GM10248 (cell line): ENCODE measurements at regions of chr4 and their contacts with region 1.

Region 1: DNA sequence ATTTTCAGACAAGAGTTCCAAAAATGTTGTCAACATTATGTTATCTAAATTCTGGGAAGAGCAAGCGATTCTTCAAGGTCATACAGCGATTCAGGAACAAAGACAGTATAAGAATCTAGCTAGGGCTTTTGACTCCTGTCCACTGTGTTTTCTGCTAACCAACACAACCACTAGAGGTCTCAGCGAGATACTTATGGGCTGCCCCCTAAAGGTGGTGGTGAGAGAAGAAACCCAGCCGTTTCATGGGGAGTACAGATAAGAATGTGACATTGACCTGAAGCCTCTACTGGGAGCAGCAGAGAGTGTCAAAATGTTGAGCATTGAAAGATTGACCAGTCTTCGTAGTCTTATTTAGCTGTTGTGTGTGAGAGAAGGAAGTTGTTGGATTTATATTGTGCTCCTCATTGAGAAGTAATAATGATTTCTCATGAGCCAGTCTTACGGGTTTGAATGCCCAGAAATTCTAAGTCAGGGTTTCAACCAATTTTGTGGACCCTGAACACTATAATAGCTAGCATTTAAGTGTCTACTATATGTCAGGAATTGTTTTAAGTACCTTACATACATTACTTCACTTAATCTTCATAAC is 168.3 kb downstream of the SPRY1 start:
- DNase-seq: peak; percentile 76
- CTCF ChIP-seq: peak; percentile 88

Region 2: DNA sequence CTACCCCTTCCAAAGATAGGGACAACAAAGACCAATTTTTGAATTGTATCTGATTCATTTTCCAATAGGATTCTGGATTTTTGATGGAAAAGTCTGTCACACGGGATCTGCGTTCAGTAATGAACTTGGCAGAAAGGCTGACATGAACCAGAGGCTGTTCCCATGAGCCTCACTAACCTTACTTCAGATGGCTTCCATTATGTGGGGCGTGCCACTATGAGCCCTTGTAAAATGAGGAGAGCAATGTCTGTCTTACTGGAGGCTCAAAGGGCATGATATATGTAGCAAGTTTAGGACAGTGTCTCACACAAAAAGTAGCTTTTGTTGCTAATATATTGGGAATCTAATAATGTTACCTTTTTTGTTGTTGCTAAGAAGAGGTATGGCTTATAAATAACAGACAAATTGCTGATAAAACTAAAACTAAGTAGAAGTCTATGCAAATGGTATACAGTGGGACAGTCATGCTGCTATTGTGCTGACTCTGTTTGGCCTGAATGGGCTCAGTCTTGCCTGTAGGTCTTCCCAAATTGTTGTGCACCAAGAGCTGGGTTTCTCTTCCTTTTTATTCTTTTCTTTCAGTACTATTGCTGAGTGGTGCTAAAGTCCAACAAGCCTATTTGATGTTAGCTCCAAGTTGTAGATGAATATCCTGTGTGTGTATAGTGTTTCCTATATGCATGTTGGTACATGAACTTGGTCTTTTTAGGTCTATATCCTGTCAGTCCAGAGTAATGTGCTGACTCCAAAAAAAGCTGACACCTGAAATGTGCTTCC is 36.2 kb before region 1 on chr4:
- CTCF ChIA-PET with region 1: no interaction called
- POLR2A ChIA-PET with region 1: no interaction called
- DNase-seq: no peak
- CTCF ChIP-seq: no peak

Region 3: GRCh38 chr4:123580981-123581664 is 16.3 kb after region 1 on chr4:
- CTCF ChIA-PET with region 1: interaction called, 19 read pairs
- POLR2A ChIA-PET with region 1: no interaction called
- DNase-seq: no peak
- CTCF ChIP-seq: no peak

Region 4: GRCh38 chr4:123588631-123589241 is 23.9 kb after region 1 on chr4:
- CTCF ChIA-PET with region 1: interaction called, 19 read pairs
- POLR2A ChIA-PET with region 1: no interaction called
- DNase-seq: peak; percentile 12
- CTCF ChIP-seq: no peak

Region 5: GRCh38 chr4:123606946-123607542 is 42.2 kb after region 1 on chr4:
- CTCF ChIA-PET with region 1: interaction called, 10 read pairs
- POLR2A ChIA-PET with region 1: no interaction called
- DNase-seq: no peak
- CTCF ChIP-seq: no peak

Region 6: GRCh38 chr4:123661080-123661737 is 96.4 kb after region 1 on chr4:
- CTCF ChIA-PET with region 1: interaction called, 23 read pairs
- POLR2A ChIA-PET with region 1: no interaction called
- DNase-seq: no peak
- CTCF ChIP-seq: no peak

Region 7: DNA sequence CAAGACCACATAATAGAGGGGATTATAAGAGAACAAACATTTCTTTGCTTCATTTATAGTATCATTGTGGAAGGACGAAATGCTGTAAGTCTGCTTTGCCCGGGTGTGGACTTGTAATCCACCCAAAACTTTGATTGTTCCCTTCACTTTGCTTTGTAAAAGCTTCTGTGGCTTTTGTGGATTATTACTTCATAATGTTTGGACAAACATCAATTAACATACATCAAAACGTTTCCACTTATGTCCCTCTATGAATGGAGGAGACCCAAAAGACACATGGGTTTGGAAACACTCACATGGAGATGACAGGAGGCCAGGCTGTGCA is 247.2 kb after region 1 on chr4:
- CTCF ChIA-PET with region 1: no interaction called
- POLR2A ChIA-PET with region 1: no interaction called
- DNase-seq: no peak
- CTCF ChIP-seq: no peak